ENCODE measurements at regions of chr20 and their contacts with region 1.

Region 1: GRCh38 chr20:38043512-38044300 is 10.2 kb downstream of the RPRD1B start:
- DNase-seq: peak; percentile 46
- H3K4me3 Mint-ChIP-seq: no peak overlapping the region
- H3K27ac Mint-ChIP-seq: no peak overlapping the region
- H3K4me1 Mint-ChIP-seq: peaks cover 46% of the 10 kb centered on the region
- H3K27me3 Mint-ChIP-seq: no peaks in the 10 kb centered on the region

Region 2: DNA sequence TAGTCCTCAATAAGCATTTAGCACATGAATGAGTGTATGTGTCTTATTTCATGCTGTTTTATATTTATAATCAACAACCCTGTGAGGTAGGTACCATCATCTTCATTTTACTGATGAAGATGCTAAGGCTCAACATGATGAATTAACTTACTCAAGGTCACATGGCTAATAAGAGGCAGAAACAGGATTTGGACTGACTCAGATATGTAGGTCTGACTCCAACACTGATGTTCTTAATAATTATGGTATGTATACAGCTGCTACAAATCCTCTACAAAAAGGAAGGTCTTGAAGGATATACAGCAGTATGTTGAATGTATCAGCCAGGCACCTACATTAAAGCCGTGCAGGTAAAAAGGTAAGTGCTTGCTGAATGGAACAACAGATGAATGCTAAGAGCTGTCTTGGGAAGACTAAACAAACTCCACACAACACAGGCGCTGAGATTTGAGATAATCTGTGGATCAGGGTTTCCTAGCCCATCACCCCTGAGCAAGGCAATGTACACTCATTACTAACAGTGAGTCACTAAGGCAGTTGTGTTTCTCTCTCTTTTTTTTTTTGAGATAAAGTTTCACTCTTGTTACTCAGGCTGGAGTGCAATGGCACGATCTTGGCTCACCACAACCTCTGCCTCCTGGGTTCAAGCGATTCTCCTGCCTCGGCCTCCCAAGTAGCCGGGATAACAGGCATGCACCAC is 42.4 kb before region 1 on chr20:
- CTCF ChIA-PET with region 1: interaction called, 3 read pairs
- POLR2A ChIA-PET with region 1: interaction called, 3 read pairs
- intact Hi-C with region 1: loop called (anchors 2 kb)
- DNase-seq: peak; percentile 52
- H3K4me3 Mint-ChIP-seq: no peak overlapping the region
- H3K27ac Mint-ChIP-seq: peak overlapping the region; percentile 65
- H3K4me1 Mint-ChIP-seq: peaks cover 40% of the 10 kb centered on the region
- H3K27me3 Mint-ChIP-seq: no peaks in the 10 kb centered on the region

Region 3: GRCh38 chr20:38033310-38034107 is 10.2 kb before region 1 on chr20 and contains the starts of genes RPRD1B and TTI1:
- CTCF ChIA-PET with region 1: interaction called, 3 read pairs
- POLR2A ChIA-PET with region 1: interaction called, 17 read pairs
- intact Hi-C with region 1: no loop called
- DNase-seq: peak; percentile 94
- H3K4me3 Mint-ChIP-seq: peak within 1 kb of the TSS; percentile 91
- H3K27ac Mint-ChIP-seq: peak within 1 kb of the TSS; percentile 98
- H3K4me1 Mint-ChIP-seq: peaks cover 66% of the 10 kb centered on the region
- H3K27me3 Mint-ChIP-seq: no peaks in the 10 kb centered on the region
- total RNA-seq, gene RPRD1B: 26.2 to 28.9 TPM
- total RNA-seq, gene TTI1: 31.8 to 32.7 TPM